ENCODE measurements at regions of chr17 and their contacts with region 1.

Region 1: GRCh38 chr17:50094753-50095619 is at the start of gene PDK2:
- DNase-seq: peak; percentile 92 to 98 (median 97)

Region 2: DNA sequence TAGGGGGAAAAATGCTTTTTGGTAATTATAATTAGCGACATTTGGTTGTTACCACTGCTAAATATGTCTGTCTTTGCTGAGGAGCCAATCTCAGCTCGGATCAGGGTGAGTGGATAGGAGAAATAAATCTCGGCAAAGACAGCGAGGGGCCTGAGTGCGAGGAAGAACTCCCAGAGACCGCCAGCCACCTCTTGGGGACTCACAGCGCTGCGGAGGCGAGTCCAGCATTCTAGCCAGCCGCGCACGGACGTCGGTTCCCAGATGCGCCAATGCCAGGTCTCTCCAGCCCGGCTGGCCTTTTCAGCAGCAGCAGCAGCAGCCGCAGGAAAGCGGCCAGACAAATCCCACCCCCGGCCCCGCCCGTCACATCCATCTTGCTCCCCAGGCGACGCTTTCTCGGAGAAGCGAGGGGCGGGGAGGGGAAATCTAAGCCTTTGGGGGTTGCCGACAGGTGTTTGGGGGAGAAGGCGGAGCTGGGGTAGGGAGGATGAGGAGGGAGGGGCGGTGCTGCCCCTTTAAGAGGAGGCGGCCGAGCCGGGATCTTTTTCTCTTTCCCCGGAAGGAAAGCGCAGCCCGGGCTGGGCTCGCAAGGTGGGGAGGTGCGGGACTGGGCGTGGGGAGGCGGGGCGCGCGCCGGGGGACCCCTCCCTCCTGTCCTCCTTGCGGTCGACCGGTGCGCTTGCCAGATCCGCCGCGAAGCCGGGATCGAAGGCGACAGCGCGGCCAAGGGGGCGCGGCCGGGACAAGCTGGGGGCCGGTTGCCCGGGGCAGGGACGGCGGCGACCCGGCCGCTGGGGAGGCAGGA is 39.4 kb before region 1 on chr17 and contains the start of gene ITGA3:
- intact Hi-C with region 1: no loop called
- DNase-seq: peak; percentile 41 to 92 (median 80)

Region 3: DNA sequence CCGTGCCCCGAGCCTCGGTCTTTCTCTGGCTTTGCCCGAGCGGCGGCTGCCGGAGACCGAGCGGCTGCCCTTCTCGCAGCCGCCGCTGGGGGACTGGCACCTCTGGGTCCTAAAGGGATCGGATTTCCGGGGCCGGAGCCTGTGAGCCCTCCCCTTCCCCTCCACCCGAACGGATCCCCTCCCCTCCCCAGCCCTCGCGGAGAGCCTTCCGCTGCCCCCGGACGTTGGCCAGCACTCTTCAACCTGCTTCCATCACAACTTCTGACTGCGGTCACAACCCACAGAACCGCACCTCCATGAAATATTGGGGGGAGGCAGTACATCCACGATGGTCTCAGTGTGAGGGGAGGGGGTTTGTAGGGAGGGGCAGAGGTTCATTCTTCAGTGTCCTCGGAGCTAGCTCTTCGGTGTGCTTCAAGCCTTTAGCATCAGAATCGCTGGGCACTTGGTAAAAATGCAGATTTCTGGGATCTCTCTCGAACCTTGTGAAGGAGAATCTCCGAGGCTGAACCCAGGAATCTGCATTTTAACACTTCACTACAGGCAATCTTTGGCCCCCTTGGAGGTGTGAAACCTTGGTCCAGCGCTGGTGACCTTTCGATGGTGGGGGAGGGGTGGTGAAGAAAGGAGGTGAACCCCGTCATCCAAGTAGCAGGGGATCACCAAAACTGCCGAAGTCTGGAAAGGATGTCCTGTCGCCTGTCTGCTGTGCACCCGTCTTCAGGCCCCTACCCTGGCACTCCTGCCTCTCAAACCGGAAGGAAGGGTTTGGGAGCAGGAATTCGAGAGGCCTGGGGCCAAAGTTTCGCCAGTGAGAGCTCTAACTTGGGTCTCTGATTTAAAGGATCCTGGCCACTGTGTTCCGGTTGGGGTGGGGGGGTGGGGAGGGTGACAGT is 56.3 kb after region 1 on chr17:
- intact Hi-C with region 1: loop called (anchors 2 kb)
- DNase-seq: peak; percentile 72 to 97 (median 93)

Region 4: DNA sequence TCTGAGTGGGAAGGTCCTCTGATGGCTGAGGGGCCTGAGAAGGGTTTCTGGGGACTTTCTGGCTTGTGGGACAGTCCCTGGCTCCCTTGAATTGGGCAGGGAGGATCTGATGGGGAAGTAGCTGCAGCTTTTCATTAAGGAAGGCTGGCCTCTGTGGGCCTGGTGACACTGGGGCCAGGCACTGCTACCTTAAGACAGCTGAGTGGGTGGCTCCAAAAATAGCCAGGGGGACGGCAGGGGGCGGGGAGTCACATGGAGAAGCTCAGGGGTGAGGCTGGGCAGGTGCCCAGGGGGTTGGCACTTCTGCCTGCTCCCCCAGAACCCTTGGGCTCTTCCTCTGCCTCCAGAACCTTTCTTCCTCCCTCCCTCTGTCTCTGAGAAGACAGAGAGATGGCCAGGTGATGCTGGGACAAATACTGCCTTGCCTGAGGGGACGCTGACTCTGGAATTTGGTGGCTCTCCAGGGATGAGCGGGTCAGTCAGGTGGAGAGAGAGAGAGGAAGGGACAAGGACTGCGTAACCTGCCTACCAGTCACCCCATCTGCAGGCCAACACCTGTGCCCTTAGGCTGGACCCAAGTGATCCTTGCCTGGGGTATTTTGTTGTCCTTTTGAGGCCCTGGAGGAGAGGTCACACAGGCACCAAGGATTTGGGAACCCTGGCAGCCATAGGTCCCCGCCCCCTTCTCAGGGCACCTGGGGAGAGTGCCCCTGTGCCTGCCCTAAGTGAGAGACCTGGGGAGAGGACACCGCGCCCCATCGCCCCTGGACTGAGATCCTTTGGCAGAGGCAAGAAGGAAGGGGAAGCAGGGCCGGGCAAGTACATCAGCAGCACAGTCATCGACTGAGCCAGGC is 69.1 kb after region 1 on chr17:
- intact Hi-C with region 1: no loop called
- DNase-seq: no peak

Measured in head of caudate nucleus (tissue), 42 donors.